ENCODE measurements at regions of chr22 and their contacts with region 1.

Region 1: DNA sequence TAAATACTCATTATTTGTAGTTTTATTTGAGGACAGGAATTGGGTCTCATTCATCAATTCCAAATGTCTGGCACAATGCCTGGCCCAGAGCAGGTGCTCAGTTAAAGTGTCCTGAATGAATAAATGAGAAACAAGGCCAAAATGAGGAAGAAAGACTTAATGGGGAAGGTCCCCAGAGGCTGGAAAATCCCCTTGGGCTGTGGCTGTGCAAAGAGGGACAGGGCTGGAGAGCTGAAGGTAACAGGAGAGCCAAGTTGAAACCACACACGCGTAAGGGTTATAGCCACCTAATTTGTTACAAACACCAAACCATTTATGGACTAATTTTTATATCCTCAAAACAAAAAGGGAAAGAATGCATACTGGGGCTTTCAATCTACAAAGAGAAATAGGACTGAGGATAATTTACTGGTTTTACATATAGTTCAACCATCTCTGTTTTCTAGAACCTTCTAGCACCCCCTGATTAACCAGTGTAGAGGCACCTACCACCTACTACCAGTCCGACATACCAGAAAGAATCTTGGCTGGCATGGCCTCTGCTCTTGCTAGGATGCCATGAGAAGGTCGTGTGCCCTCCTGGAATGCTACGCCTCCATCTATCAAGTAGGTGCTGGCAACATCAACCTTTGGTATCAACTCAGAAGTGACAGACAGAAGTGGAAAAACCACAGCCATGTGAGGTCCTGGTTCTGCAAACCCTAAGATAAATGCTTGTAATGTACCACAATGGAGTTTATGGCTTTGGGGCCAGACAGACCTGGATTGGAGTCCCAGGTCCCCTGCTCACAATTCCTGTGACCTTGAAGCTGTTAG is 28.4 kb downstream of the MYH9 start:
- DNase-seq: peak; percentile 86
- ATAC-seq: peak; percentile 88
- H3K4me3 ChIP-seq: no peak overlapping the region
- H3K27ac ChIP-seq: peak overlapping the region; percentile 39
- H3K4me1 ChIP-seq: peaks cover 90% of the 10 kb centered on the region
- H3K27me3 ChIP-seq: no peaks in the 10 kb centered on the region
- CTCF ChIP-seq: no peak
- EP300 ChIP-seq: peak; percentile 75 to 76; a peak in 2 of 4 replicates
- POLR2A ChIP-seq: no peak
- RAD21 ChIP-seq: no peak

Region 2: GRCh38 chr22:36191106-36191836 is 168.1 kb before region 1 on chr22:
- CTCF ChIA-PET with region 1: no interaction called
- POLR2A ChIA-PET with region 1: no interaction called
- RAD21 ChIA-PET with region 1: no interaction called
- SMC1A ChIA-PET with region 1: no interaction called
- in situ Hi-C with region 1: no loop called
- intact Hi-C with region 1: no loop called
- DNase-seq: no peak
- ATAC-seq: no peak
- H3K4me3 ChIP-seq: no peak overlapping the region
- H3K27ac ChIP-seq: no peak overlapping the region
- H3K4me1 ChIP-seq: no peaks in the 10 kb centered on the region
- H3K27me3 ChIP-seq: no peaks in the 10 kb centered on the region; a peak in 1 of 4 replicates
- CTCF ChIP-seq: no peak
- EP300 ChIP-seq: no peak
- POLR2A ChIP-seq: no peak
- RAD21 ChIP-seq: no peak

Region 3: DNA sequence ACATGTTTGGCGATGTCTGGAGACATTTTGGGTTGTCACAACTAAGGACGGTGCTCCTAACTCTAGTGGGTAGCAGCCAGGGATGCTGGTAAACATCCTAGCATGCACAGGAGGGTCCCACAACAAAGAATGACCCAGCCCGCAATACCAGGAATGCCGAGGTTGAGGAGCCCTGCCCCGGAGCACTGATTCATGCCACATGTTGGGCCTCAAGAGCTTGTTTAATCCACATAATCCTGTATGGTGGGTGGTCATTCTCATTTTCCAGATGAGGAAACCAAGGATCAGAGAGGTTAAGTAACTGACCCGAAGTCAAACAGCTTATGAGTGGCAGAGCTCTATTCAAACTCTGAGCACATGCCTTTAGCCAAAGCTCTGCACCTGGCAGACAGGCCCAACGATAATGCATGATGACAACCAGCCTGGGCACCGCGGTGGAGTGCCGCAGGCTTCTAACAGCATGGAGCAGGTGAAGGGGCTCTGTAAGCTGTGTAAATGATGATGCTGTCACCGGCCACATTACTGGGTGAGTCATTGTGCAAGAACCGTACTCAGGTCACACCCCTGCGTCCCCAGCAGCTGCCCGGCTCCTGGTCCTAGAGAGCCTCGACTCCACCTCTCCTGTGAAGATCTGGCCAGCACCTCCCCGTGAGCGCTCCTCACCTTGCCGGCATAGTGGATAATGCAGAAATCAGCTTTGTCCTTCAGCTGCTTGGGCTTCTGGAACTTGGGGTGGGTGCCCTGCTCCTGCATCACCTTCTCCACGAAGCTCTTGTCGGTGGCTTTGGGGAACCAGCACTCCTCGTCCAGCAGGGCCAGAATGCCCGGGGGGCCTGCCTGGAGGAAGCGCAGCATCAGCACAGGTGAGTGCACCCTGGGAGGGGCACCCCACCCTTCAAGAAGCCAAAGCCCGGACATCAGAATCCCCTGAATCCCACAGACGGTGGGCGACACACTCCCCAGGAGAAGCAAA is 47.7 kb before region 1 on chr22:
- CTCF ChIA-PET with region 1: no interaction called
- POLR2A ChIA-PET with region 1: no interaction called
- RAD21 ChIA-PET with region 1: no interaction called
- SMC1A ChIA-PET with region 1: no interaction called
- in situ Hi-C with region 1: no loop called
- intact Hi-C with region 1: no loop called
- DNase-seq: no peak
- ATAC-seq: no peak
- H3K4me3 ChIP-seq: no peak overlapping the region
- H3K27ac ChIP-seq: no peak overlapping the region
- H3K4me1 ChIP-seq: no peaks in the 10 kb centered on the region
- H3K27me3 ChIP-seq: no peaks in the 10 kb centered on the region
- CTCF ChIP-seq: no peak
- EP300 ChIP-seq: no peak
- POLR2A ChIP-seq: peak; percentile 36; the same call in 1 of the 2 replicates
- RAD21 ChIP-seq: no peak

Region 4: DNA sequence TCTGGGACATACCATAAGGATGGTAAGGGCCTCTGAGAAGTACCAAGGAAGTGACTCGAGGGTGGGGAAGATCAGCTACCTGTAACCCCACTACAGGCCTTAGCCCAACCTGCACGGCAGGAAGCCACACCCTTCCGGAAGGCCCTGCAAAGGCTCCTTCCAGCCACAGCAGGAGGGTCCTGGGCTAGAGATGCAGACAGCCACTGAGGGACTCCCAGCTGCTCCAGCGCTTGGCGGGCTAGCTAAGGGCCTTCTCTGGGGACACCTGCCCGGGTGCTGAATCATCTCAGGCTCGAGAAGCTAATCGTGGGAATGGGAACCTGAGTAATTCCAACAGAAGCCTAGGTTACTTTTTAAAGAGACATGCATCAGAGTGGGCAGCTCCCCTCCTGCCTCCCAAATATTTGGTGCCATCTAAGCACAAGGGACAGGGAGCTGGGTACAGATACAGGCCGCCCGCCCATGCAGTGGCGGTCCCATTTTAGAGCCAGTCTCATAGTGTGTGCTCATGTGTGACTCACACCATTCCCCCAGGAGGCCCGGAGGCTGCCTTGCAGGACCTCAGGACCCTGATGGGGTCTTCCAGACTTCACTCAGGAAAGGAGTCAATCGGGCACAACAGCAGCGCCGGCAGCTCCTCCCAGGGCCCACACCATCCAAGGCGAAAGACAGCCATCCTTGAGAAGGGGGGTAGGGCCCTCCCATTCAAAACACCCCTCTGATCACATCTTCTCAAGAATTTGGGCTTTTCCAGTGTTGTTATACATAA is 20.4 kb after region 1 on chr22:
- CTCF ChIA-PET with region 1: interaction called, 11 read pairs
- POLR2A ChIA-PET with region 1: interaction called, 21 read pairs
- RAD21 ChIA-PET with region 1: interaction called, 6 read pairs
- SMC1A ChIA-PET with region 1: interaction called, 15 read pairs
- in situ Hi-C with region 1: no loop called
- intact Hi-C with region 1: no loop called
- DNase-seq: no peak
- ATAC-seq: peak; percentile 47
- H3K4me3 ChIP-seq: peak overlapping the region; percentile 70
- H3K27ac ChIP-seq: peak overlapping the region; percentile 78
- H3K4me1 ChIP-seq: peaks cover 70% of the 10 kb centered on the region
- H3K27me3 ChIP-seq: no peaks in the 10 kb centered on the region
- CTCF ChIP-seq: no peak
- EP300 ChIP-seq: no peak
- POLR2A ChIP-seq: peak; percentile 51
- RAD21 ChIP-seq: no peak

Region 5: DNA sequence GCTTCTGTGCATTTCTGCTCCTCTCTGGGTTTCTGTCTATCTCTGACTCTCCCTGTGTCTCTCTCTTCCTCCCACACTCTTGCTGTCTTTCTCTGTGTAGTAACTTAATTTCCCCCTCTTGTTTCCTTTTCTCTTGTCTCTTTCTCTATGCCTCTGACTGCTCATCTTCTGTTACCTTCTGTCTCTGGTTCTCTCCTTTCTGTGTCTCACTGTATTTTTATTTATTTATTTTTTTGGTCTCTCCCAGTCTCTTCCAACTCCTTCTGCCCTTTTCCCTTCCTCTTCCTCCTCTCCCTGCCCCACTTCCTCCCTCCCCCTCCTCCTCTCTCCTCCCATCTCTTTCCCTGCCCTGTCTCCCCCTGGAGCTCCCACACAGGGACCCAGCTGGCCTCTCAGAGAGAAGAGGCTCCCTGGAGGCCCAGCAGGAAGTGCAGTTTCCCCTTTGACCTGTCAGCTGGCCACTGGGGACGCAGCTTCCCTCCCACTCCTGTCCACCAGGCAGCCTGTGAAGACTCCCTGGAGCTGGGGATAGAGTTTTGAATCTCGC is 66.7 kb after region 1 on chr22:
- CTCF ChIA-PET with region 1: no interaction called
- POLR2A ChIA-PET with region 1: no interaction called
- RAD21 ChIA-PET with region 1: no interaction called
- SMC1A ChIA-PET with region 1: no interaction called
- in situ Hi-C with region 1: no loop called
- intact Hi-C with region 1: no loop called
- DNase-seq: no peak
- ATAC-seq: peak; percentile 76
- H3K4me3 ChIP-seq: no peak overlapping the region
- H3K27ac ChIP-seq: no peak overlapping the region
- H3K4me1 ChIP-seq: peaks cover 7% of the 10 kb centered on the region; the same call in 1 of the 2 replicates
- H3K27me3 ChIP-seq: no peaks in the 10 kb centered on the region
- CTCF ChIP-seq: no peak
- EP300 ChIP-seq: no peak
- POLR2A ChIP-seq: no peak
- RAD21 ChIP-seq: no peak

Region 6: DNA sequence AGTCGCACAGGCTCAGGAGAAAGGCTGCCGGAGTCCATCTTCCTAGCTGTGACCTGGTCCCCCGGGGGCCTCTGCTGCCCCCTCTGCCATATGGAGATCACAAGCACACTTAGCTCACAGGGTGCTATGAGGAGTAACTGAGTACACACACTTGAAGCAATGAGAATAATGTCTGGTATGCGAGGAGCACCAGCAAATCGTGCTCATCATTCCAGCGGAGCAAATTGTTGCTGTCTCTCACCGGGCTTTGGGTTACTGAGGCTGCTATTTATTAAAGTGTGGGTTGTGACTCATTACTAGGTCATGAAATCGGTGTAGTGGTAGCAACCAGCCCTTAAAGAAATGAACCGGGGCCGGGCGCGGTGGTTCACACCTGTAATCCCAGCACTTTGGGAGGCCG is 217.6 kb after region 1 on chr22:
- CTCF ChIA-PET with region 1: no interaction called
- POLR2A ChIA-PET with region 1: no interaction called
- RAD21 ChIA-PET with region 1: no interaction called
- SMC1A ChIA-PET with region 1: no interaction called
- in situ Hi-C with region 1: no loop called
- intact Hi-C with region 1: no loop called
- DNase-seq: no peak
- ATAC-seq: no peak
- H3K4me3 ChIP-seq: no peak overlapping the region
- H3K27ac ChIP-seq: no peak overlapping the region
- H3K4me1 ChIP-seq: no peaks in the 10 kb centered on the region
- H3K27me3 ChIP-seq: peaks cover 0 to 4% of the 10 kb centered on the region in 2 experiments; a peak in 1 of 4 replicates
- CTCF ChIP-seq: no peak
- EP300 ChIP-seq: no peak
- POLR2A ChIP-seq: no peak
- RAD21 ChIP-seq: no peak

Measured in GM12878 (cell line).